Vagina (tissue), 2 donors: ENCODE measurements at regions of chr15 and their contacts with region 1.

Region 1: GRCh38 chr15:59501597-59501996 is 63.6 kb downstream of the FAM81A start:
- DNase-seq: no peak
- H3K4me3 ChIP-seq: no peak overlapping the region
- H3K27ac ChIP-seq: no peak overlapping the region
- H3K4me1 ChIP-seq: no peaks in the 10 kb centered on the region
- H3K27me3 ChIP-seq: no peaks in the 10 kb centered on the region
- CTCF ChIP-seq: peak in 1 of 3 experiments; percentile 35
- POLR2A ChIP-seq: no peak

Region 2: GRCh38 chr15:58987489-58988005 is 514.0 kb before region 1 on chr15 and contains the start of gene RNF111:
- intact Hi-C with region 1: loop called (anchors 5 kb)
- DNase-seq: peak in 1 of 2 donors; percentile 93
- H3K4me3 ChIP-seq: peak within 1 kb of the TSS; percentile 80 to 88
- H3K27ac ChIP-seq: peak within 1 kb of the TSS; percentile 91
- H3K4me1 ChIP-seq: peaks cover 31% of the 10 kb centered on the region
- H3K27me3 ChIP-seq: no peaks in the 10 kb centered on the region
- CTCF ChIP-seq: no peak
- POLR2A ChIP-seq: peak in 1 of 2 donors; percentile 78
- total RNA-seq, gene RNF111: 35.6 TPM